MCF 10A (cell line): ENCODE measurements at regions of chr12 and their contacts with region 1.

Region 1: GRCh38 chr12:106108185-106108835 is 30.4 kb downstream of the NUAK1 start:
- DNase-seq: peak; percentile 36
- H3K4me3 Mint-ChIP-seq: peak overlapping the region; percentile 2
- H3K27ac Mint-ChIP-seq: peak overlapping the region; percentile 71
- H3K4me1 Mint-ChIP-seq: peaks cover 46% of the 10 kb centered on the region
- H3K27me3 Mint-ChIP-seq: no peaks in the 10 kb centered on the region
- CTCF ChIP-seq: no peak

Region 2: GRCh38 chr12:106126441-106127337 is 18.4 kb after region 1 on chr12:
- CTCF ChIA-PET with region 1: interaction called, 18 read pairs
- POLR2A ChIA-PET with region 1: interaction called, 31 read pairs
- intact Hi-C with region 1: no loop called
- DNase-seq: peak; percentile 40
- H3K4me3 Mint-ChIP-seq: no peak overlapping the region
- H3K27ac Mint-ChIP-seq: peak overlapping the region; percentile 31
- H3K4me1 Mint-ChIP-seq: peaks cover 22% of the 10 kb centered on the region
- H3K27me3 Mint-ChIP-seq: no peaks in the 10 kb centered on the region
- CTCF ChIP-seq: no peak